HAP-1 (cell line): ENCODE measurements at regions of chr10 and their contacts with region 1.

Region 1: DNA sequence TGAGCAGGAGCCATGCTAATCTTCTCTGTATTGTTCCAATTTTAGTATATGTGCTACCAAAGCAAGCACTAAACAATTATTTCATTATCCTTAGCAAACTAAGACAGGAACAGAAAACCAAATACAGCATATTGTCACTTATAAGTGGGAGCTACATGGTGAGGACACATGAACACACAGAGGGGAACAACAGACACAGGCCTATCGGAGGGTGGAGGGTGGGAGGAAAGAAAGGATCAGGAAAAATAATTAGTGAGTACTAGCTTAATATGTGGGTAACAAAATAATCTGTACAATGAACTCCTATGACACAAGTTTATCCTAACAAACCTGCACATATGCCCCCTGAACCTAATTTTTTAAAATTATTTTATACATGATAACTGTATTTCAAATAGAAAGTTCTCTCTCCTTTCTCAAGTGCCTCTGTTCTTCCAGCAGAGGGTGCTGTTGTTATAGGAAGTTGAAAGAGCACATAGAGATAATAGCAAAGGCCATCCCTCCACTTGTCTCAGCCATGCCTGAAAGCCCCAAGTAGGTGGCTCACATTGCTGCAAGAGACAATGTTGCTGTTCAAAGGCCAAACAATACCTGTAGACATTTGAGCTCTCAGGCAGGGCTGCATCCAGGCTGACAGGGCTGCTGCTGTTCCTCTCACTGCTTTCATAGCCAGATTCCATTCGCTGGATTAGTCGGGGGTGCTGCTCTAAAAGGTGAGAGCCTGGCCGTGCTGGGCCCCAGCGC is 33.4 kb upstream of the PPP3CB start:
- DNase-seq: peak; percentile 65 to 81
- H3K4me3 ChIP-seq: no peak overlapping the region
- H3K4me1 ChIP-seq: no peaks in the 10 kb centered on the region
- H3K27me3 ChIP-seq: no peaks in the 10 kb centered on the region

Region 2: GRCh38 chr10:73190188-73190587 is 339.1 kb before region 1 on chr10:
- in situ Hi-C with region 1: no loop called
- DNase-seq: no peak
- H3K4me3 ChIP-seq: no peak overlapping the region
- H3K4me1 ChIP-seq: no peaks in the 10 kb centered on the region
- H3K27me3 ChIP-seq: no peaks in the 10 kb centered on the region

Region 3: DNA sequence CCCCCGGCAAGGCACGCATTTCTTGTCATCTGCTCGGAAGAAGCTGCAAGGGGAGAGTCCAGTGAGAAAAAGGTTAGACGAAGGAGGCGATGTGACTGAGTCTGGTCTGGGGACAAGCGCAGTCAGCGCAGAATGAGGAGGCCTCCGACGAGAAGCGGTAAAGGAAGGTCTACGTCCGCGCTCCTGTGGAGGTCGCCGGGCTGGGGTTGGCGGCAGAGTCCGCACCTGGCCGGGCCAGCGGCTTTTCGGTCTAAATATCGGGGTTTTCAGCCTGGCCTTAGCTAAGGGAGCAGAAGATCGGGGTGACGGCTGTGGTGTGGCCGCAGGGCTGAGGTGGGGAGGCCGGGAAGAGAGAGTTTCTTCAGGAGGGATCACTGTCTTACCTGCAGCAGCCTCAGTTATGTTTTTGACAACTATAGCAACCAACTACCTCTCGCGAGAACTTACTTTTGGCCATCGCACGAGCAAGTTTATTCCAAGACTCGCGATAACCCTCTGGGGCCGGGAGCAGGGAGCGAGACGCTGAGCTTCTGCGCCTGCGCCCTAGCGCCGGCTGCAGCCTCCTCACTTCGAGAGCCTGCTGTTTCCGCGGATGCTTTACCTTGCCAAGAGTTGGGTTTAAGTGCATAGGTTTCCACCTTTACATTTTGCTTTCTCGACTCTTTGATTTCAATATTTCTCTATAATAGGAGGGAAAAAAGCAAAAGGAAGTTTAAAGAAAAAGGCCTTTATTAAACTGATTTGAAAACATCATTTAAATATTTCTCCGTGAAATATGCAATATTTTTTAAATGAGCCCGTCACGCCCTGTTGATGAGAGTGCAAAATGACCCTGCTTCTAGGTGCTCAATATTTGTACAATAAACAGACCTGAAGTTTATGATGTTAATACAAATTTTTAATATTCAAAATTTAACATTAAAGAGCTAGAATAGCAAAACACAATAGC is 170.7 kb before region 1 on chr10 and contains the start of gene CFAP70:
- in situ Hi-C with region 1: no loop called
- DNase-seq: peak; percentile 95 to 96
- H3K4me3 ChIP-seq: peak within 1 kb of the TSS; percentile 63
- H3K4me1 ChIP-seq: peaks cover 7% of the 10 kb centered on the region; the same call in 1 of the 2 replicates
- H3K27me3 ChIP-seq: no peaks in the 10 kb centered on the region

Region 4: GRCh38 chr10:73644015-73644743 is 114.9 kb after region 1 on chr10:
- in situ Hi-C with region 1: loop called (anchors 5 kb)
- DNase-seq: peak; percentile 67 to 80
- H3K4me3 ChIP-seq: no peak overlapping the region
- H3K4me1 ChIP-seq: no peaks in the 10 kb centered on the region
- H3K27me3 ChIP-seq: no peaks in the 10 kb centered on the region

Region 5: GRCh38 chr10:73759512-73760115 is 230.4 kb after region 1 on chr10:
- in situ Hi-C with region 1: no loop called
- DNase-seq: no peak
- H3K4me3 ChIP-seq: no peak overlapping the region
- H3K4me1 ChIP-seq: no peaks in the 10 kb centered on the region
- H3K27me3 ChIP-seq: no peaks in the 10 kb centered on the region

Region 6: DNA sequence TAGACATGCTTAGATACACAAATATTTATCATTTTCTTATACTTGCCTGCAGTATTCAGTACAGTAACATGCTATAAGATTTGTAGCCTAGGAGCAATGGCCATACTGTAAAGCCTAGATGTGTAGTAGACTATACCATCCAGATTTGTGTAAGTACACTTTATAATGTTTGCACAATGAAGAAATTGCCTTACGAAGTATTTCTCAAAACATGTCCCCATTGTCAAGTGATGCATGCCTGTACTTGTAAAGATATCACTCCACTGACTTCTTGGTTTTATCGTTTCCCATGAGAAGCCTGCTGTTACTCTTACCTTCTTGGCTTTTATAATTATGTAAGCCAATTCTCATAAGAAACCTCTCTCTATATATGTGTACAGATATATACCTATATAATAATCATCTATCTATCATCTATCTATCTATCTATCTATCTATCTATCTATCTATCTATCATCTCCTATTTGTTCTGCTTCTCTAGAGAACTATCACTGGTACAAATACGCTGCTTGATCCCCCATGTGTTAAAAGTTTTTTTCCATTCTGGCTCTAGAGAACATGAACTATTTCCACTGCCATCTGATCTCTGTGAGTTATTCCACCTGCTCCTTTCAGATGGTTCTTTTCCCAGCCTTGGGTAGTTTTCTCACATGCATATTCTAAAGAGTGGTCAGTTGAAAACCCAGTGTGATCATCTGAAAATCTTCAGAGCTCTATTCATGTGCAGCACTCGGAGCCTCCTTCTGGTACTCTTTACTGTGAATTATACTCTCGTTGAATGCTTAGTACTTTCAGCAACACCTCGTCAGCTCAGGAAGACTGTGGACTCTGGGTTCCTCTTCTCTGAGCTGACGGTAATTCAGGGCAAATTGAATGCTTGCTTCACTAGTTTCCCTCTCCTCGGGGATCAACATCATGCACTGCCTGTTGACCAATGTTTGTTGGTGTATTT is 454.1 kb after region 1 on chr10:
- in situ Hi-C with region 1: no loop called
- DNase-seq: no peak
- H3K4me3 ChIP-seq: no peak overlapping the region
- H3K4me1 ChIP-seq: peaks cover 15% of the 10 kb centered on the region
- H3K27me3 ChIP-seq: no peaks in the 10 kb centered on the region